Mammary epithelial cell (primary cell): ENCODE measurements at regions of chr9 and their contacts with region 1.

Region 1: DNA sequence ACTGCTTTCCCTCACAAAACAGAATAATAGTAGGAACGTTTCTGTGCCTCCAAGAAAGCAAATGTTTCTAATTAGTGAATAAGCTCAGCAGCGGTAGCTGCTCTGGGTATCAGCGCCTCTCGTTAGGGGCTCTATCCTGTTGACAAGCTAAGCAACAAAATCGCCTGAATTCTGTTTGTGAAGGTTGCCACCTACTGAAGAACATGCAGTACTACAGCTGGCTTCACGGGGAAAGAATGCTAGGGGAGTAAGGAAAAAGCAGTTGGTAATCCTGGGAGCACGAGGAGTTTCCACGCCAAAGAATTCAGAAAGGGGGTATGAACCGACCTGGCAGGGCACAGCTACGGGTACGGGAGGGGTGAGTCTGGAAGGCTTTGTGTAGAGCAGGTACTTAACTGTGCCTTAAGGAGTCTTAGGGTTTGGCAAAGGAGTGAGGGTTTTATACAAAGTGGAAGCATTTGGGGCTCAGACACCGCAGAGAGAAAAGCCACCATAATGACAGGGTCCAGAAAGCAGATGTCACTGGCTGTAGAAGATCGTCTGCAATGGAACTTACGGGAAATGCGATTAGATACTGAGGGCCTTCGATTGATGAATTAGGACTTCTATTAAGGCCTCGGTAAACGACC is 171.7 kb downstream of the TTC39B start:
- DNase-seq: peak; percentile 57
- H3K4me3 ChIP-seq: peak overlapping the region in 2 of 3 experiments; percentile 20 to 34
- H3K27ac ChIP-seq: no peak overlapping the region
- H3K4me1 ChIP-seq: peaks cover 4% of the 10 kb centered on the region
- H3K27me3 ChIP-seq: no peaks in the 10 kb centered on the region
- CTCF ChIP-seq: peak; percentile 87 to 88

Region 2: GRCh38 chr9:14652729-14653377 is 482.4 kb before region 1 on chr9:
- CTCF ChIA-PET with region 1: no interaction called
- dilution Hi-C with region 1: no loop called
- in situ Hi-C with region 1: no loop called
- intact Hi-C with region 1: no loop called
- DNase-seq: peak; percentile 3
- H3K4me3 ChIP-seq: no peak overlapping the region
- H3K27ac ChIP-seq: no peak overlapping the region
- H3K4me1 ChIP-seq: no peaks in the 10 kb centered on the region
- H3K27me3 ChIP-seq: no peaks in the 10 kb centered on the region
- CTCF ChIP-seq: peak; percentile 25 to 59

Region 3: DNA sequence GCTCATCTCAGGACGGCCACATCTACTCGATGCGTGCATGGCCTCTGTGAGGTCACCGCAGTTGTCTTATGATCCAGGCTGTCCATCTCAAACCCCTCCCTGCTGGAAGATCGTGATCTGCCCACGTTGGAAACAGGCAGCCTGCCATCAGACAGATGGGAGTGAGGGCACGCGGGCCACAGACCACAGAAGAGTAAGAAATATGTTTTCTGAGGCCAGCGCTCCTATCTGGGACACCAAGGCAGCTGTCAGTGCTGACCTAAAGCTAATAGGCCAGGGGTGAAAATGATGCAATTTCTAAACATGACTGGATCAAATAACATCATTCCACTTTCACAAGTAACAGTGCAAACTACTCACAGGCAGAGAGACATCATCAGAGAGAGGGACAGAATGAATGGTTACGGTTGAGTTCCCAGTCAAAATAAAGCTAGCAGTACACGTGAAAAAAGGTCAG is 355.7 kb before region 1 on chr9:
- CTCF ChIA-PET with region 1: no interaction called
- dilution Hi-C with region 1: no loop called
- in situ Hi-C with region 1: no loop called
- intact Hi-C with region 1: loop called (anchors 10 kb)
- DNase-seq: no peak
- H3K4me3 ChIP-seq: no peak overlapping the region
- H3K27ac ChIP-seq: no peak overlapping the region
- H3K4me1 ChIP-seq: no peaks in the 10 kb centered on the region
- H3K27me3 ChIP-seq: no peaks in the 10 kb centered on the region
- CTCF ChIP-seq: no peak

Region 4: DNA sequence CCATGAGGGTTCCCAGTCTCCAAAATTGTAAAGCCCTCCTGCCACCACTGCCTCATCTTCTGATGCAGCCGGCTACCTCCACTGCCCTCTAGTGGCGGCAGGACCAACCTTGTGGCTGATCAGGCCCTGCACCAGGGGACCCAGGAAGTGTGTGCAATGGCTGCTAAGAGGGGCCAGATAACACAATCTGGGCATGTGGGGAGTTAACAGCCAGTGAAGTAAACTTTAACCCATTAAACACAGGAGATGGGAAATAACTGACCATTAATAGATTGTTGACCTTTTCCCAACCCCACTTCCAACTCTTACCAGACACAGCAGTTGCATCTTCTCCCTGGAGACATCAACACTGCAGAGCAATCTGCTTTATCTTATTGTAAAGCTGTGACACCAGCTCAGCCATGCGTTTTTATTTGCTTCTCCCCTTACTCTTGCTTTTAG is 288.4 kb before region 1 on chr9:
- CTCF ChIA-PET with region 1: no interaction called
- dilution Hi-C with region 1: no loop called
- in situ Hi-C with region 1: no loop called
- intact Hi-C with region 1: loop called (anchors 2 kb)
- DNase-seq: peak; percentile 23
- H3K4me3 ChIP-seq: no peak overlapping the region
- H3K27ac ChIP-seq: no peak overlapping the region
- H3K4me1 ChIP-seq: no peaks in the 10 kb centered on the region
- H3K27me3 ChIP-seq: peaks cover 2% of the 10 kb centered on the region
- CTCF ChIP-seq: peak; percentile 79 to 89

Region 5: DNA sequence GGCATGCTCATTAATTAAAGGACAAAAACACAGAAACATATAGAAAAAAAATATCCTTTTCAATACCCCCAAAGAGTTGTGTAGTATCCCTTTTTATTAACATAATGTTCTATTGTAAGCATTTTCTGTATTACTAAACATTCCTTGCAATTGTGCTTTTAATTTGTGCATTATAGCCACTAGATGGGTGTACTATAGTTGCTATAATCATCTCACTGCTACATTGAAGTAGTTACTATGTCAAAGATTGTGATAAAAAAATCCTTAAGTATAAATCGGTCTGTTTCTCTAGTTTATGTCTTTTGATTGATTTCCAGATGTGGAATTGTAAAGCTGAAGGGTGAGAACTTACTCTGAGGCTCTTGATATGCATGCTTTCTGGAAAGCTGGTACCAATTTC is 246.4 kb before region 1 on chr9:
- CTCF ChIA-PET with region 1: interaction called, 6 read pairs
- dilution Hi-C with region 1: no loop called
- in situ Hi-C with region 1: no loop called
- intact Hi-C with region 1: loop called (anchors 1 kb)
- DNase-seq: no peak
- H3K4me3 ChIP-seq: no peak overlapping the region
- H3K27ac ChIP-seq: no peak overlapping the region
- H3K4me1 ChIP-seq: no peaks in the 10 kb centered on the region
- H3K27me3 ChIP-seq: no peaks in the 10 kb centered on the region
- CTCF ChIP-seq: peak in 1 of 2 donors; percentile 10

Region 6: GRCh38 chr9:14926941-14927624 is 208.2 kb before region 1 on chr9:
- CTCF ChIA-PET with region 1: no interaction called
- dilution Hi-C with region 1: no loop called
- in situ Hi-C with region 1: no loop called
- intact Hi-C with region 1: no loop called
- DNase-seq: no peak
- H3K4me3 ChIP-seq: no peak overlapping the region
- H3K27ac ChIP-seq: no peak overlapping the region
- H3K4me1 ChIP-seq: no peaks in the 10 kb centered on the region
- H3K27me3 ChIP-seq: no peaks in the 10 kb centered on the region
- CTCF ChIP-seq: no peak

Region 7: GRCh38 chr9:15104826-15105420 is 30.4 kb before region 1 on chr9:
- CTCF ChIA-PET with region 1: interaction called, 4 read pairs
- dilution Hi-C with region 1: no loop called
- in situ Hi-C with region 1: no loop called
- intact Hi-C with region 1: loop called (anchors 1 kb)
- DNase-seq: peak; percentile 20
- H3K4me3 ChIP-seq: no peak overlapping the region
- H3K27ac ChIP-seq: no peak overlapping the region
- H3K4me1 ChIP-seq: no peaks in the 10 kb centered on the region
- H3K27me3 ChIP-seq: no peaks in the 10 kb centered on the region
- CTCF ChIP-seq: peak; percentile 69 to 86

Region 8: GRCh38 chr9:15501179-15501578 is 365.9 kb after region 1 on chr9:
- CTCF ChIA-PET with region 1: no interaction called
- dilution Hi-C with region 1: no loop called
- in situ Hi-C with region 1: no loop called
- intact Hi-C with region 1: no loop called
- DNase-seq: no peak
- H3K4me3 ChIP-seq: no peak overlapping the region
- H3K27ac ChIP-seq: no peak overlapping the region
- H3K4me1 ChIP-seq: no peaks in the 10 kb centered on the region
- H3K27me3 ChIP-seq: no peaks in the 10 kb centered on the region
- CTCF ChIP-seq: no peak